ENCODE measurements at regions of chr4 and their contacts with region 1.

Region 1: GRCh38 chr4:86593688-86594558 is at the start of gene PTPN13:
- DNase-seq: peak; percentile 97
- ATAC-seq: peak; percentile 90
- H3K4me3 ChIP-seq: peak within 1 kb of the TSS; percentile 98
- H3K27ac ChIP-seq: peak within 1 kb of the TSS; percentile 41
- H3K4me1 ChIP-seq: peaks cover 32% of the 10 kb centered on the region
- H3K27me3 ChIP-seq: no peaks in the 10 kb centered on the region
- CTCF ChIP-seq: no peak
- total RNA-seq, gene PTPN13: 12.1 and 16.2 TPM in 2 replicates

Region 2: GRCh38 chr4:86302251-86302650 is 291.7 kb before region 1 on chr4:
- CTCF ChIA-PET with region 1: no interaction called
- POLR2A ChIA-PET with region 1: no interaction called
- intact Hi-C with region 1: no loop called
- DNase-seq: no peak
- ATAC-seq: no peak
- H3K4me3 ChIP-seq: no peak overlapping the region
- H3K27ac ChIP-seq: no peak overlapping the region
- H3K4me1 ChIP-seq: no peaks in the 10 kb centered on the region
- H3K27me3 ChIP-seq: no peaks in the 10 kb centered on the region
- CTCF ChIP-seq: no peak

Region 3: GRCh38 chr4:86497980-86498862 is 95.7 kb before region 1 on chr4:
- CTCF ChIA-PET with region 1: interaction called, 4 read pairs
- POLR2A ChIA-PET with region 1: no interaction called
- intact Hi-C with region 1: loop called (anchors 1 kb)
- DNase-seq: peak; percentile 71
- ATAC-seq: peak; percentile 42
- H3K4me3 ChIP-seq: no peak overlapping the region
- H3K27ac ChIP-seq: peak overlapping the region; percentile 84
- H3K4me1 ChIP-seq: peaks cover 55% of the 10 kb centered on the region
- H3K27me3 ChIP-seq: no peaks in the 10 kb centered on the region
- CTCF ChIP-seq: peak; percentile 80

Region 4: GRCh38 chr4:86522349-86522748 is 71.6 kb before region 1 on chr4:
- CTCF ChIA-PET with region 1: interaction called, 9 read pairs
- POLR2A ChIA-PET with region 1: no interaction called
- intact Hi-C with region 1: loop called (anchors 5 kb)
- DNase-seq: peak; percentile 37
- ATAC-seq: peak; percentile 48; the same call in 1 of the 2 replicates
- H3K4me3 ChIP-seq: no peak overlapping the region
- H3K27ac ChIP-seq: peak overlapping the region; percentile 32
- H3K4me1 ChIP-seq: peaks cover 14% of the 10 kb centered on the region; the same call in 1 of the 2 replicates
- H3K27me3 ChIP-seq: no peaks in the 10 kb centered on the region
- CTCF ChIP-seq: peak; percentile 63

Region 5: GRCh38 chr4:86706923-86707597 is 113.1 kb after region 1 on chr4:
- CTCF ChIA-PET with region 1: no interaction called
- POLR2A ChIA-PET with region 1: no interaction called
- intact Hi-C with region 1: no loop called
- DNase-seq: peak; percentile 27
- ATAC-seq: peak; percentile 80
- H3K4me3 ChIP-seq: no peak overlapping the region
- H3K27ac ChIP-seq: no peak overlapping the region
- H3K4me1 ChIP-seq: peaks cover 6% of the 10 kb centered on the region; the same call in 1 of the 2 replicates
- H3K27me3 ChIP-seq: no peaks in the 10 kb centered on the region
- CTCF ChIP-seq: no peak

Region 6: GRCh38 chr4:86720508-86721068 is 126.7 kb after region 1 on chr4:
- CTCF ChIA-PET with region 1: no interaction called
- POLR2A ChIA-PET with region 1: no interaction called
- intact Hi-C with region 1: loop called (anchors 10 kb)
- DNase-seq: peak; percentile 24
- ATAC-seq: peak; percentile 56
- H3K4me3 ChIP-seq: no peak overlapping the region
- H3K27ac ChIP-seq: peak overlapping the region; percentile 10; the same call in 1 of the 2 replicates
- H3K4me1 ChIP-seq: peaks cover 12% of the 10 kb centered on the region
- H3K27me3 ChIP-seq: no peaks in the 10 kb centered on the region
- CTCF ChIP-seq: no peak

Region 7: GRCh38 chr4:86934771-86935565 is 341.0 kb after region 1 on chr4 and contains the start of gene AFF1:
- CTCF ChIA-PET with region 1: no interaction called
- POLR2A ChIA-PET with region 1: interaction called, 14 read pairs
- intact Hi-C with region 1: no loop called
- DNase-seq: peak; percentile 89
- ATAC-seq: peak; percentile 70
- H3K4me3 ChIP-seq: peak within 1 kb of the TSS; percentile 83
- H3K27ac ChIP-seq: peak within 1 kb of the TSS; percentile 87
- H3K4me1 ChIP-seq: peaks cover 29% of the 10 kb centered on the region
- H3K27me3 ChIP-seq: no peaks in the 10 kb centered on the region
- CTCF ChIP-seq: no peak
- total RNA-seq, gene AFF1: 8.1 and 9.4 TPM in 2 replicates

Measured in PC-3 (cell line).